Activated CD4-positive, alpha-beta T cell treated with anti-CD3 and anti-CD28 coated beads for 36 hours (primary cell): ENCODE measurements at regions of chr12 and their contacts with region 1.

Region 1: DNA sequence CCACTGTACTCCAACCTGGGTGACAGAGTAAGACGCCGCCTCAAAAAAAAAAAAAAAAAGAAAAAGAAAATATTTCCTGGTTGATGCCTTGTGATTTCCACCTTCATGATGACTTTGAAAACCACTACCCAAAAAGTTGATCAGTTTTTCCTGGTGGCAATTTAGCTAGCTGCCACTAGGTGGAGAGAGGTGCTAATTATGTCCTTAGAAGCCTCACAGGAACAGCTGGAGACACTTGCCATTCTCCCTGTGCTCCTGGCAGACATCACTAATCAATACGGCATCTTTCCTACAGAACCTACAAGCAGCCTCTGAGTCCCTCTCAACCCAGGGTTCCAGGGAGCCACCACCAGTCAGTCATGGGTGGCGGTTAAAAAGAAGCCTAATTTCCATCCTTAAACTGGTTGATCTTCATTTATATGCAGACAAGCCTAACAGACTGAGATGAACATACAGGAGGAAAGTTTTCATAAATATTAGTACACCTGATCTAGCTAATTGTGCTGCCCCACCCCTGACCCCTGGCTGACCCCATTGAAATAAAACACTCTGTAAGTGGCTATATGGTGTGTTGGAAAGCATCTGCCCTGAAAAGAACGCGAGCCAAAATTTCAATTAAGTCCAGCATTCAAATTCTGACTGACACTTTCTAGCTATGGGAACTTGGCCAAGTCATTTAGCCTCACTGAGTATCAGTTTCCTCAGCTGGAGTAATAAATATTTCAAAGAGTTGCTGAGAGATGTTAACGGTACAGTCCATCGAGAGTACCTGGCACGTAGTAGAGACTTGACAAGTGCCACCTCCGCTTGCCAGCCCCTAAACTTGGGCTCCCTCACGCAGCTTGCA is 6.2 kb upstream of the OAS1 start:
- DNase-seq: peak; percentile 62
- ATAC-seq: peak; percentile 76
- H3K4me3 Mint-ChIP-seq: no peak overlapping the region
- H3K27ac Mint-ChIP-seq: no peak overlapping the region
- H3K4me1 Mint-ChIP-seq: peaks cover 19% of the 10 kb centered on the region
- H3K27me3 Mint-ChIP-seq: no peaks in the 10 kb centered on the region

Region 2: DNA sequence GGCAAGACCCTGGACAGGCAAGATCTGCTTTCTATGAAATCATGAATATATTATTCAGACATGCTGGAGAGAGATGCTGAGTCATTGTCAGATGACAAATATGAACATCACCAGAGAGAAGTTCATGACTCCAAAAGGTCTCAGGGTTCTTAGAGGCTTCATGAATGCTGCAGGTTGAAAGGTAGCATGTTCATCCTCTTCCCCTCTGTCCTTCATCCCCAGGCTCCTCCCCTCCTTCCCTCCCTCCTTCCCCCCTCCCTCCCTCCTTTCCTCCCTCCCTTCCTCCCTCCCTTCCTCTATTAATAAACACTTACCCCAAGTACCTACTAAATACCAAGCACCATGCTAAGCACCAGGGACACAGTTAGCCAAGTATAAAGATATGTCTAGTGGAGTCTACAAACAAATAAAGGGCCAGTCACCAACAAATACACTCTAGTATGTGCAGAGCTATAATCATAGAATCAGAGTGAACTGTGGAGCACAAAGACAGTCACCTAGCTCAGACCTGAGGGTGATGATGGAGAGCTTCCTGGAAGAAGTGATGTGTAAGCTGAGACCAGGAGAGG is 62.8 kb before region 1 on chr12:
- CTCF ChIA-PET with region 1: no interaction called
- POLR2A ChIA-PET with region 1: no interaction called
- intact Hi-C with region 1: no loop called
- DNase-seq: no peak
- ATAC-seq: peak; percentile 23
- H3K4me3 Mint-ChIP-seq: no peak overlapping the region
- H3K27ac Mint-ChIP-seq: no peak overlapping the region
- H3K4me1 Mint-ChIP-seq: no peaks in the 10 kb centered on the region
- H3K27me3 Mint-ChIP-seq: peaks cover 25% of the 10 kb centered on the region

Region 3: GRCh38 chr12:113030875-113031525 is 130.5 kb after region 1 on chr12:
- CTCF ChIA-PET with region 1: interaction called, 8 read pairs
- POLR2A ChIA-PET with region 1: no interaction called
- intact Hi-C with region 1: loop called (anchors 1 kb)
- DNase-seq: no peak
- ATAC-seq: no peak
- H3K4me3 Mint-ChIP-seq: no peak overlapping the region
- H3K27ac Mint-ChIP-seq: no peak overlapping the region
- H3K4me1 Mint-ChIP-seq: no peaks in the 10 kb centered on the region
- H3K27me3 Mint-ChIP-seq: peaks cover 3% of the 10 kb centered on the region